Pancreas (tissue), 10 donors: ENCODE measurements at regions of chr13 and their contacts with region 1.

Region 1: GRCh38 chr13:31431722-31432137 is 232.0 kb downstream of the B3GLCT start:
- DNase-seq: peak in 4 of 6 donors; percentile 10 to 68 (median 42)
- ATAC-seq: peak in 3 of 4 donors; percentile 60 to 62 (median 61)
- H3K4me3 ChIP-seq: no peak overlapping the region
- H3K27ac ChIP-seq: no peak overlapping the region
- H3K4me1 ChIP-seq: no peaks in the 10 kb centered on the region
- H3K27me3 ChIP-seq: peaks cover 0 to 10% (median 0%) of the 10 kb centered on the region in 4 donors
- CTCF ChIP-seq: peak; percentile 80 to 90 (median 85)

Region 2: GRCh38 chr13:31029102-31029501 is 402.6 kb before region 1 on chr13:
- intact Hi-C with region 1: no loop called
- DNase-seq: no peak
- ATAC-seq: no peak
- H3K4me3 ChIP-seq: no peak overlapping the region
- H3K27ac ChIP-seq: no peak overlapping the region
- H3K4me1 ChIP-seq: no peaks in the 10 kb centered on the region
- H3K27me3 ChIP-seq: no peaks in the 10 kb centered on the region
- CTCF ChIP-seq: no peak

Region 3: DNA sequence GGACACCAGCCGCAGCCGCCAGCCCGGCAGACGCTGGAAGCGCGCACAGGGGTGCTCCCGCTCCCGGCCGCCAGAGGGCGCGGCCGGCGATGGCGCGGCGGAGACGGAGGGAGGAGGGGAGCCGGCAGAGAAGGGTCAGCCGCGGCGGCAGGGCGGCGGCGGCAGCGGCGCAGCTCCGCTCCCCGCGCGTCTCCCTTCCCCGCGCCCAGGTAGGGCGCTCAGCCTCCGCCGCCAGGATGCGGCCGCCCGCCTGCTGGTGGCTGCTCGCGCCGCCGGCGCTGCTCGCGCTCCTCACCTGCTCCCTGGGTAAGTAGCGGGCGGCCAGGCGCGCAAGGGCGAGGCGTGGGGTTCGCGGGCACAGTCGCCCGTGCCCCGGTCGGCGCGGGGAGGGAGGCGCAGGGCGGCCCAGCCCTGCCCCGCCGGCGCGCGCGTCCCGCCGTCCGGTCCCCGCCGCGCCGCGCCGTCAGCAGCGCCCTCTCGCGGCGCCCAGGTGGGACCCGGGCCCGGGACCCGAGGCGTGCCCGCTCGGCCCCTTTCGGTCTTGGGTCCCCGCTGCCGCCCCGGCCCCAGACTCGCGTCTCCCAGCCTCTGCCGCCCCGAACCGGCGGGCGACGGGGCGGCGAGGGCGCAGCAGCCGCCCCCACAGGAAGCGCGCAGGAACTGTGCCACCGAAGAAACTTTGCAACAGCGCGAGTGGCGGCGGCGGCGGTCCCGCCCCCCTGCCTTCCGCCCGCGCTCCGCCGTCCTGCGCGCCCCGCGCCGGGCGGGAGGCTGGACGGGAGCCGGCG is 231.7 kb before region 1 on chr13 and contains the start of gene B3GLCT:
- intact Hi-C with region 1: no loop called
- DNase-seq: peak; percentile 67 to 96 (median 86)
- ATAC-seq: peak; percentile 86 to 96 (median 91)
- H3K4me3 ChIP-seq: peak within 1 kb of the TSS; percentile 61 to 85 (median 80)
- H3K27ac ChIP-seq: peak within 1 kb of the TSS; percentile 85 to 98 (median 92)
- H3K4me1 ChIP-seq: peaks cover 0 to 7% (median 0%) of the 10 kb centered on the region in 3 donors
- H3K27me3 ChIP-seq: no peaks in the 10 kb centered on the region
- CTCF ChIP-seq: peak; percentile 78 to 94 (median 86)
- total RNA-seq, gene B3GLCT: 1.6 to 3.4 (median 2.1) TPM

Region 4: DNA sequence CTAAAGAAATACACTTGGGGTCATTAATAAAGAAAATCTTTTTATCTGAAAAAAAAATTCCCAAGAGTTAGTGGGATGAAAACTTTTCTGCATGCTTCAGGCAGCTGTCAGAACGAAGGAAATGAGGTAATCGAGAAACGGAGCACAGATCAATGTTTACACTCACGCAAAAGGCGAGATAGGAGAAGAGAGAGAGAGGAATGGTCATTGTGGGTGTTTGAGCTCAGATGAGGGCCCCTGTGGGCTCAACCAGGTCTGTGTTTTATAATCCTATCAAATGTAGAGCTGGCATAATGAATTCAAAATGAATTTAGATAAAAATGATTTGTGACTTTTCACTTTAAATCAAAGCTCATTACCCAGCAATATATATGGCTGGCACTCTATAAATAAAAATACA is 301.3 kb after region 1 on chr13:
- intact Hi-C with region 1: loop called in 1 of 3 experiments (anchors 10 kb)
- DNase-seq: no peak
- ATAC-seq: peak in 1 of 4 donors; percentile 44
- H3K4me3 ChIP-seq: no peak overlapping the region
- H3K27ac ChIP-seq: no peak overlapping the region
- H3K4me1 ChIP-seq: no peaks in the 10 kb centered on the region
- H3K27me3 ChIP-seq: no peaks in the 10 kb centered on the region
- CTCF ChIP-seq: no peak

Region 5: GRCh38 chr13:31742097-31742734 is 310.5 kb after region 1 on chr13:
- intact Hi-C with region 1: loop called in 2 of 3 experiments (anchors 5 to 10 kb)
- DNase-seq: peak in 5 of 6 donors; percentile 17 to 70 (median 46)
- ATAC-seq: peak; percentile 63 to 92 (median 90)
- H3K4me3 ChIP-seq: no peak overlapping the region
- H3K27ac ChIP-seq: no peak overlapping the region
- H3K4me1 ChIP-seq: no peaks in the 10 kb centered on the region
- H3K27me3 ChIP-seq: peaks cover 0 to 22% (median 8%) of the 10 kb centered on the region in 4 donors
- CTCF ChIP-seq: peak; percentile 89 to 99 (median 97)